Activated B cell treated with CpG ODN at 0.5 μM for 24 hours (primary cell): ENCODE measurements at regions of chrX and their contacts with region 1.

Region 1: DNA sequence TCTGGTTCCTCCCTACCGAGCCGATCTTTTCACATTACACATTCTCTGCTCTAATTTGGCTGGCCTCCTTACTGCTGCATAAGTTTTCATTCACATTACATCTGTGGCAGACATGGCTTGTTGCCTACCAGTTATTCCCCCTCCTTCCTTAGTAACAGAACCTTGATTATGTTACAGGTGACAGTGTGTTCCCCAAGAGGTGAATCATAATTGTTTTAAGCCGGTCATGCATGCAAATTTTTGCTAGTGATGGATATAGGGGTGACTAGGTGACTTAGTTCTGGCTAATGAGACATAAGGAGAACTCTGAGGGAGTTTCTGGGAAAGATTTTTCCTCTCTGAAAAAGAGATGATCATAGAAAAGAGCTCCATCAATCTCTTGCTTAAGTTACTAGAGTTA is 8.4 kb upstream of the LAMP2 start:
- DNase-seq: no peak
- ATAC-seq: no peak
- H3K4me3 Mint-ChIP-seq: no peak overlapping the region
- H3K27ac Mint-ChIP-seq: no peak overlapping the region
- H3K4me1 Mint-ChIP-seq: no peaks in the 10 kb centered on the region
- H3K27me3 Mint-ChIP-seq: no peaks in the 10 kb centered on the region
- CTCF ChIP-seq: no peak

Region 2: DNA sequence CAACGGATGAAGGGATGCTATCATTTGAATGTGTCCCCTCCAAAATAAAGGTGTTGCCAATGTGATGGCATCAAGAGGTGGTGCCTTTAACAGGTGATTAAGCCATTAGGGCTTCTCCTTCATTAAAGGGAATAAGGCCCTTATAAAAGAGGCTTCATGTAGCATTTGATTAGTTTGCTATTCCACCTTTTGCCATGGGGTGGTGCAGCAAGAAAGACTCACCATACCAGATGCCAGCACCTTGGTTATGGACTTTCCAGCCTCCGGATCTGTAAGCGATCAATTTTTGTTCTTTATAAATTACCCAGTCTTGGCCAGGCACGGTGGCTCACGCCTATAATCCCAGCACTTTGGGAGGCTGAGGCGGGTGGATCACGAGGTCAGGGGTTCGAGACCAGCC is 1086.2 kb before region 1 on chrX:
- CTCF ChIA-PET with region 1: no interaction called
- POLR2A ChIA-PET with region 1: no interaction called
- intact Hi-C with region 1: no loop called
- DNase-seq: no peak
- ATAC-seq: no peak
- H3K4me3 Mint-ChIP-seq: no peak overlapping the region
- H3K27ac Mint-ChIP-seq: no peak overlapping the region
- H3K4me1 Mint-ChIP-seq: no peaks in the 10 kb centered on the region
- H3K27me3 Mint-ChIP-seq: no peaks in the 10 kb centered on the region
- CTCF ChIP-seq: no peak

Region 3: DNA sequence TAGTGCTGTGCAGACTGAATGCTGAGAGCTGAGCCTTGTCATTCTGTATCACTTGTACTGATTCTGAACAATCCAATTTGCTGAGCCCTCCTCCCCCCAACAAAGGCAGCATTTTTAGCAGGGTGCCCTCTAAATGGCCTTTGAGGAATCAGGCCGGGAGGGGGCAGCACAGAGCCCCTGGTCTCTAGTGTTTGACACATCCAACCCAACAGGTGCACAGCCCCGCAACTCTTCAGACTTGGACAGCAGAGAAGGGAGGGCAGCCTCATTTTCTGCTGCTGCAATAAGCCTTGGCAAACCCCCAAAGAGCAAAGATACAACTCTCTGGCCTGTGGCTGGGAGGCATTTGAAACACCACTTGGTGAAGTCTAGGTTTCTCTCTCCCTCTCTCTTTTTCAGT is 112.1 kb before region 1 on chrX:
- CTCF ChIA-PET with region 1: no interaction called
- POLR2A ChIA-PET with region 1: no interaction called
- intact Hi-C with region 1: loop called (anchors 1 kb)
- DNase-seq: peak; percentile 16
- ATAC-seq: peak; percentile 62
- H3K4me3 Mint-ChIP-seq: no peak overlapping the region
- H3K27ac Mint-ChIP-seq: no peak overlapping the region
- H3K4me1 Mint-ChIP-seq: peaks cover 8% of the 10 kb centered on the region
- H3K27me3 Mint-ChIP-seq: no peaks in the 10 kb centered on the region
- CTCF ChIP-seq: no peak

Region 4: GRCh38 chrX:120419463-120419862 is 58.0 kb before region 1 on chrX:
- CTCF ChIA-PET with region 1: no interaction called
- POLR2A ChIA-PET with region 1: no interaction called
- intact Hi-C with region 1: no loop called
- DNase-seq: no peak
- ATAC-seq: peak; percentile 40
- H3K4me3 Mint-ChIP-seq: peak overlapping the region; percentile 24
- H3K27ac Mint-ChIP-seq: peak overlapping the region; percentile 69
- H3K4me1 Mint-ChIP-seq: peaks cover 34% of the 10 kb centered on the region
- H3K27me3 Mint-ChIP-seq: no peaks in the 10 kb centered on the region
- CTCF ChIP-seq: no peak